Colonic mucosa (tissue), 4 donors: ENCODE measurements at regions of chr4 and their contacts with region 1.

Region 1: GRCh38 chr4:8688041-8688937 is 95.7 kb downstream of the CPZ start:
- DNase-seq: peak; percentile 24
- H3K4me3 ChIP-seq: no peak overlapping the region
- H3K27ac ChIP-seq: no peak overlapping the region
- H3K4me1 ChIP-seq: no peaks in the 10 kb centered on the region
- H3K27me3 ChIP-seq: peaks cover 9% of the 10 kb centered on the region
- CTCF ChIP-seq: peak; percentile 59

Region 2: DNA sequence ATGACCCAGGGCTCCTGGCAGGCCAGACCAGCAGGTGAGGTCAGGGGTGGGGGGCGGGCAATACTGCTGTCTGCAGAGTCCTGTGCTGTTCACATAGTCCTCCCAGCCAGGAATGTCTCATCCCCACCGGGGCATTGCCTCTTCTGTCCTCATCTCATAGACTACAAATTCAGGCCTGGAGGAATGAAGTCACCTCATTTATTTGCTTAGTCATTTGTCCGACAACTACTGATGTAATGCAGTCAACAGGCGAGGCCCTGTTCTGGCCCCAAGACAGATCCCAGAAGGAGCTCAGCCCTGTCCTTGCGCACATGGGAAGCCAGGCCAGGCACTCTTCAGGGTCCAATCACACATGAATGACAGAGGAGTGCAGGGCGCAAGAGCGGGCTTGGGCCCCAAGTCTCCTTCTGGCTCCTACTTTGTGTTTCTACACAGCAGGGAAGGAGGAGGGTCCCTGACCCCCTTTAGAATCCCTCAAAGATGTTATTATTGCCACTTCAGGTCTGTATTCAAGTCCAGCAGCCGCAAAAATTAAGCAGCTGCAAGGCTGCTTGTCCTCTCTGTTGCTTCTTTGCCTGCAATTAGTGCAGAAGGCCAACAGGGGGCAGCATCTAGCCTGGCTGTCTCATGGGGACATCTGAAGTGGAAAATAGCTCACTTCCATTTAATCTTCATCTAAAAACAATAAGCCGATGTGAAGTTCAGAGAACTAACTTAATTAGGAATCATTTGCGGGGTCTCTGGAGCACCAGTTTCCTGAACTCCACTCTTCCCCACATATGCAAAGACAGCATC is 198.5 kb after region 1 on chr4:
- intact Hi-C with region 1: loop called (anchors 5 kb)
- DNase-seq: no peak
- H3K4me3 ChIP-seq: no peak overlapping the region
- H3K27ac ChIP-seq: no peak overlapping the region
- H3K4me1 ChIP-seq: no peaks in the 10 kb centered on the region
- H3K27me3 ChIP-seq: peaks cover 15% of the 10 kb centered on the region
- CTCF ChIP-seq: no peak